Sigmoid colon (tissue), 7 donors: ENCODE measurements at regions of chr4 and their contacts with region 1.

Region 1: GRCh38 chr4:39527273-39528060 is at the start of gene UGDH:
- DNase-seq: peak; percentile 98
- H3K4me3 ChIP-seq: peak within 1 kb of the TSS; percentile 70 to 92 (median 90)
- H3K27ac ChIP-seq: peak within 1 kb of the TSS; percentile 89 to 98 (median 97)
- H3K4me1 ChIP-seq: peaks cover 0 to 28% (median 21%) of the 10 kb centered on the region in 4 donors
- H3K27me3 ChIP-seq: no peaks in the 10 kb centered on the region
- CTCF ChIP-seq: no peak
- EP300 ChIP-seq: peak in 1 of 4 donors; percentile 9
- POLR2A ChIP-seq: peak; percentile 79 to 92
- total RNA-seq, gene UGDH: 33.4 to 51.2 (median 43.0) TPM

Region 2: DNA sequence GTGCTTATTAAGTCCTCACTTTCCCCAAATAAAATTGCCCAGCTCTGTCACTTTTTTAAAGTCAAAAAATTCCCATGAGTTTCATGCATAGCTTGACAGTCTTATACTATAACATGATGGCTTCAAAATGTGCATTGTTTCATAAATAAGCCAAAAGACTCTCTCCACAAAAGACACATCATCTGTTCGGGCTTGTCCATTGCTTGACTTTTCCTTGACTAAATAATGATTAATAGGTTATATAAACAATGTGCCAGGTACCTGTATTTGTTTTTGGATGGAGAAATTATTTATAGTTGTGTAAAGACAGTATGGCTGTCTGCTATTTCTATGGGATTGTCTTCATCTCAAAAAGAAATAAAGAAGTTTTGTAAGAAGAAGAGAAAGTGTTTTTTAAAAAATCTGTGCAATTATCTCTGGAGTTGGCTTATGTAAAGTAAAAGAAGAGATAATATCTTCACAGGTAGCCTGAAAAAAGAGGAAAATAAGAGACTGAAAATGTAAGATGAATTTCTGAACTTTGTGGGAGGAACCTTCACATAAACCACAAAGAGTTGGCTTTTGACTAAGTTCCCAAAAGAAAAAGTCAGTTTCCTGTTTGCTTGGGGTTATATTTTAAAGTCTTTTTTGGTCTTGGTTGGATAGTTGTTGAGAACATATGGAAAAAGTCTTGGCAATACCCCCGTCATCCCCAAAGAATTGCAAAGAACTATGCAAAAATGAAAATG is 1192.5 kb before region 1 on chr4:
- intact Hi-C with region 1: no loop called
- DNase-seq: no peak
- H3K4me3 ChIP-seq: no peak overlapping the region
- H3K27ac ChIP-seq: no peak overlapping the region
- H3K4me1 ChIP-seq: no peaks in the 10 kb centered on the region
- H3K27me3 ChIP-seq: no peaks in the 10 kb centered on the region
- CTCF ChIP-seq: no peak
- EP300 ChIP-seq: no peak
- POLR2A ChIP-seq: no peak

Region 3: GRCh38 chr4:39365830-39366771 is 161.4 kb before region 1 on chr4 and contains the start of gene RFC1:
- intact Hi-C with region 1: loop called (anchors 5 kb)
- DNase-seq: peak; percentile 96
- H3K4me3 ChIP-seq: peak within 1 kb of the TSS; percentile 89 to 93 (median 92)
- H3K27ac ChIP-seq: peak within 1 kb of the TSS; percentile 87 to 93 (median 90)
- H3K4me1 ChIP-seq: peaks cover 0 to 19% (median 15%) of the 10 kb centered on the region in 4 donors
- H3K27me3 ChIP-seq: no peaks in the 10 kb centered on the region
- CTCF ChIP-seq: no peak
- EP300 ChIP-seq: no peak
- POLR2A ChIP-seq: peak in 1 of 2 donors; percentile 37
- total RNA-seq, gene RFC1: 30.2 to 46.6 (median 38.6) TPM

Region 4: GRCh38 chr4:40056716-40057585 is 529.5 kb after region 1 on chr4 and contains the start of gene N4BP2:
- intact Hi-C with region 1: loop called (anchors 2 kb)
- DNase-seq: peak; percentile 89
- H3K4me3 ChIP-seq: peak within 1 kb of the TSS; percentile 76 to 88 (median 86)
- H3K27ac ChIP-seq: peak within 1 kb of the TSS; percentile 98 to 100 (median 100)
- H3K4me1 ChIP-seq: peaks cover 0 to 27% (median 21%) of the 10 kb centered on the region in 4 donors
- H3K27me3 ChIP-seq: no peaks in the 10 kb centered on the region
- CTCF ChIP-seq: peak in 3 of 4 experiments; percentile 21 to 72 (median 25)
- EP300 ChIP-seq: no peak
- POLR2A ChIP-seq: peak; percentile 70 to 73
- total RNA-seq, gene N4BP2: 7.9 to 11.9 (median 9.2) TPM